Activated CD4-positive, alpha-beta T cell treated with anti-CD3 and anti-CD28 coated beads for 36 hours (primary cell): ENCODE measurements at regions of chr9 and their contacts with region 1.

Region 1: GRCh38 chr9:133087429-133088145 is 25.8 kb downstream of the CEL start:
- DNase-seq: no peak
- ATAC-seq: no peak
- H3K4me3 Mint-ChIP-seq: no peak overlapping the region
- H3K27ac Mint-ChIP-seq: no peak overlapping the region
- H3K4me1 Mint-ChIP-seq: no peaks in the 10 kb centered on the region
- H3K27me3 Mint-ChIP-seq: no peaks in the 10 kb centered on the region

Region 2: DNA sequence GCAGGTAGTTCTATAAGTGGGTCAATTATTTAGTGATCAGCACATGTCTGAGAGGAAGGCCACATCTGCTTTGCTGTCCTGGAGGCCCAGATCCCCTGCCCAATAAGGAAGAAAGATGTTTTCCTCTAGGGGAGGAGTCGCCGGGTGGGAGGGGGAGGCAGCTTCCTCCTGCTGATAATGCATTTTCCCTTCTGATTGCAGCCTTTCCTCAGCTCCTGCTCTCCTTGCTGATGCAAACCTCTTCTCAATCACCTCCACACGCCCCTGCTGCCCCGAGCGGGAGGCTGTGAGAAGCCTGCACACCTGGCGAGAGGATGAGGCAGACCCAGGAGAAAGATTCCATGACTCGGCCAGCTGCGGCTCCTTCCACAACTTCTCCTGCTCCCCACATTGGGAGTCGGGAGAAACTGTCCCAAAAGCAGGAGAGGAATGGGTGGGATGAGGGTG is 932.7 kb before region 1 on chr9:
- CTCF ChIA-PET with region 1: no interaction called
- POLR2A ChIA-PET with region 1: no interaction called
- intact Hi-C with region 1: no loop called
- DNase-seq: no peak
- ATAC-seq: no peak
- H3K4me3 Mint-ChIP-seq: no peak overlapping the region
- H3K27ac Mint-ChIP-seq: no peak overlapping the region
- H3K4me1 Mint-ChIP-seq: no peaks in the 10 kb centered on the region
- H3K27me3 Mint-ChIP-seq: peaks cover 28% of the 10 kb centered on the region

Region 3: GRCh38 chr9:133067821-133068220 is 19.8 kb before region 1 on chr9:
- CTCF ChIA-PET with region 1: no interaction called
- POLR2A ChIA-PET with region 1: no interaction called
- intact Hi-C with region 1: loop called in 1 of 2 experiments (anchors 2 kb)
- DNase-seq: no peak
- ATAC-seq: no peak
- H3K4me3 Mint-ChIP-seq: no peak overlapping the region
- H3K27ac Mint-ChIP-seq: no peak overlapping the region
- H3K4me1 Mint-ChIP-seq: no peaks in the 10 kb centered on the region
- H3K27me3 Mint-ChIP-seq: no peaks in the 10 kb centered on the region